ENCODE measurements at regions of chr19 and their contacts with region 1.

Region 1: GRCh38 chr19:33406521-33407139 is 33.1 kb downstream of the CEBPG start:
- DNase-seq: peak; percentile 94
- H3K4me3 ChIP-seq: no peak overlapping the region
- H3K27ac ChIP-seq: no peak overlapping the region; a peak in 1 of 4 replicates
- H3K4me1 ChIP-seq: peaks cover 0 to 28% of the 10 kb centered on the region in 2 experiments; a peak in 1 of 4 replicates
- H3K27me3 ChIP-seq: no peaks in the 10 kb centered on the region
- CTCF ChIP-seq: peak; percentile 83
- EP300 ChIP-seq: no peak
- RAD21 ChIP-seq: peak; percentile 91

Region 2: DNA sequence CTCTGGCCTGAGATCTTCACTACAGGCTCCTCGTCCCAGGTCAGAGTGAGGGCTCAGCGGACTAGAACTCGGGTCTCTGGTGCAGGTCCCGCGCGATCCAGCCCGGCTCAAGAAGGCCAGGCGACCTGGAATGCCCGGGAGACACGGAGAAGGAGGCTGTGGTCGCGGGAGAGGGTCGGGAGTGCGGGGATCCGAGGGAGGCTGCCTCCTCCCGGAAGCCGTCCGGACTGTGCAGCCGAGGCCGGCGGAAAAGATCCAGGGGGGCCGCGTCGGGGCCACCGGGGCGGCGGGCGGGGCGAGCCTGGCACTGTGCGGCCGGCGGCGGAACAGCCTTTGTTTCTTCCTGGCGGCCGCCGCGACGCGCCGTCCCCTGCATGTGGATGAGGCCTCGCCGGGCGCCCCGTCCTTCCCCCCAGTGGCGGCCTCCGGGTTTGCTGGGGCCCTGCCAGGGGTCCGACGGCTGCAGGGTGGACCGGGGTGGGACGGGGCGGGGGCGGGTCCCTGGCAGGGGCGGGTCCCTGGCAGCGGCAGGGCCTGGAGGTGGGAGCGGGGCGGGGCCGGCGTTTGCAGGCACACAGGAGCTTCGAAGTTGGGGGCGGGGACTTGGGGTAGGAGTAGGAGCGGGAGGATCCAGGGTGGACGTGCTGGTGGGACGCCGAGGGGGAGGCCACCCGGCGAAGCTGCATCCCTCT is 179.9 kb before region 1 on chr19:
- CTCF ChIA-PET with region 1: interaction called, 11 read pairs
- POLR2A ChIA-PET with region 1: no interaction called
- DNase-seq: peak; percentile 85
- H3K4me3 ChIP-seq: no peak overlapping the region; a peak in 1 of 4 replicates
- H3K27ac ChIP-seq: no peak overlapping the region
- H3K4me1 ChIP-seq: no peaks in the 10 kb centered on the region; a peak in 1 of 4 replicates
- H3K27me3 ChIP-seq: peaks cover 38% of the 10 kb centered on the region
- CTCF ChIP-seq: no peak
- EP300 ChIP-seq: no peak
- RAD21 ChIP-seq: no peak

Region 3: GRCh38 chr19:33235269-33235995 is 171.2 kb before region 1 on chr19:
- CTCF ChIA-PET with region 1: interaction called, 511 read pairs
- POLR2A ChIA-PET with region 1: no interaction called
- DNase-seq: peak; percentile 91
- H3K4me3 ChIP-seq: peak overlapping the region in 1 of 2 experiments; percentile 40; a peak in 1 of 4 replicates
- H3K27ac ChIP-seq: no peak overlapping the region
- H3K4me1 ChIP-seq: peaks cover 0 to 8% of the 10 kb centered on the region in 2 experiments; a peak in 1 of 4 replicates
- H3K27me3 ChIP-seq: no peaks in the 10 kb centered on the region
- CTCF ChIP-seq: peak; percentile 88
- EP300 ChIP-seq: no peak
- RAD21 ChIP-seq: peak; percentile 80

Region 4: DNA sequence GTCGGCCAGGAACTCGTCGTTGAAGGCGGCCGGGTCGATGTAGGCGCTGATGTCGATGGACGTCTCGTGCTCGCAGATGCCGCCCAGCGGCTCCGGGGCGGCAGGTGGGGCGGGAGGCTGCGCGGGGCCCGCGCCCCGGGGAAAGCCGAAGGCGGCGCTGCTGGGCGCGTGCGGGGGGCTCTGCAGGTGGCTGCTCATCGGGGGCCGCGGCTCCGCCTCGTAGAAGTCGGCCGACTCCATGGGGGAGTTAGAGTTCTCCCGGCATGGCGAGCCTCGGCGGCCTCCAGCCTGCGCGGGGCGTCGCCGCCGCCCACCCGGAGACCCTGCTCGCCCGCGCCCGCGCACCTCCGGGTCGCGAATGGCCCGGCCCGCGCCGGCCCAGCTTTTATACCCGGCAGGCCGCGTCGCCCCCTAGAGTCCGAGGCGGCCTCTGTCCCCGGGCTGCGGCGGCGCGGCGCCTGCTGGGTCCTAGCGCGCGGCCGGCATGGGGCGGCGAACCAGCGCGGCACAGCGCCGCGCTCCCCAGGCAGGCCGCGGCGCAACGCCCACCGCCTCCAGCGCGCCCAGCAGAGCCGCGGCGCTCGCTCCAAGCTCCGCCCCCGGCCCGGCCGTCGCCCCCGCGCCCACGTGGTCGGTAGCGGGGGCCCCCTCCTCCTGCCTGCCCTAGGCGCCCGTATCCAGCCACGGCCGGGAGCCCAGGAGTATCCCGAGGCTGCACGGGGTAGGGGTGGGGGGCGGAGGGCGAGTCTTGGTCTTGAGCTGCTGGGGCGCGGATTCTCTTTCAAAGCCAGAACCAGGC is 104.3 kb before region 1 on chr19 and contains the start of gene CEBPA:
- CTCF ChIA-PET with region 1: interaction called, 23 read pairs
- POLR2A ChIA-PET with region 1: no interaction called
- DNase-seq: peak; percentile 96
- H3K4me3 ChIP-seq: peak within 1 kb of the TSS; percentile 57 to 68
- H3K27ac ChIP-seq: no peak within 1 kb of the TSS
- H3K4me1 ChIP-seq: peaks cover 0 to 4% of the 10 kb centered on the region in 2 experiments; a peak in 1 of 4 replicates
- H3K27me3 ChIP-seq: peaks cover 54% of the 10 kb centered on the region
- CTCF ChIP-seq: peak; percentile 45
- EP300 ChIP-seq: no peak
- RAD21 ChIP-seq: peak; percentile 35; the same call in 1 of the 2 replicates
- polyA plus RNA-seq, gene CEBPA: 0.06 and 0.15 TPM in 2 replicates

Region 5: DNA sequence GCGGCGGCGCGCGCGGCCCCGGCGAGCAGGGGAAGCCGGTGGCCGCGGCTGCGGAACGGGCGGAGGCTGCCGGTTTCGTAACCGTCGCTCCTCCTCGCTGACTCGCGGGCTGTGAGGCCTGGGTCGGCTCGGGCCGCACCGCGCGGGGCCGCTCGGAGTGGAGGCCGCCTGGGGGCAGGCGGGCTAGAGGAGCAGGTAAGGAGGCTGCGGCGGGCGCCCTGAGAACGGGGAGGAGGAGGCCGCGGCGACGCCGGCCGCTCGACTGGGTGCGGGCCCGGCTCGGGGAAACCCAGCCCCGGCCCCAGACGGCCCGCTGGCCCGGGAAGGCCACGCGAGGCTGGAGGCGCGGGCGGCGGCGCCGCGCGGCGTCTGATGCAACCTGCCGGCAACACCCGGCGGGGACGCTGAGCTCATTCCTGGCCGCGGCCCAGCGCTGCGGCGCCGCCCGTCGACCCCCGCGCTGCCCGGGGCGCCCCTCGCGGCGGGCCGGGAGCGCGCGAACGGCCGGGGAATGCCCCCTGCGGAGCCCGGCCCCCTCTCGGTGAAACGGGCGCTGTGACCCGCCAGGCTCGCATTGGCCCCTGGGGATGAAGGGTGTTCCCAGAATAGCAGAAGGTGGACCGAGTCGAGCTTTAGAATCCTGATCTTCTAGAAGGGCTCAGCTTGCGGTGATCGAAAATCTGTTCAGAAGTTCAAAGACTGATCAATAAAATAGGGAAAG is 32.8 kb before region 1 on chr19 and contains the start of gene CEBPG:
- CTCF ChIA-PET with region 1: interaction called, 15 read pairs
- POLR2A ChIA-PET with region 1: interaction called, 3 read pairs
- DNase-seq: peak; percentile 88
- H3K4me3 ChIP-seq: peak within 1 kb of the TSS; percentile 78 to 83
- H3K27ac ChIP-seq: peak within 1 kb of the TSS; percentile 89 to 90
- H3K4me1 ChIP-seq: peaks cover 13 to 20% of the 10 kb centered on the region in 2 experiments; a peak in 3 of 4 replicates
- H3K27me3 ChIP-seq: no peaks in the 10 kb centered on the region
- CTCF ChIP-seq: peak; percentile 30; the same call in 1 of the 2 replicates
- EP300 ChIP-seq: no peak
- RAD21 ChIP-seq: no peak
- polyA plus RNA-seq, gene CEBPG: 9.1 and 9.5 TPM in 2 replicates

Region 6: DNA sequence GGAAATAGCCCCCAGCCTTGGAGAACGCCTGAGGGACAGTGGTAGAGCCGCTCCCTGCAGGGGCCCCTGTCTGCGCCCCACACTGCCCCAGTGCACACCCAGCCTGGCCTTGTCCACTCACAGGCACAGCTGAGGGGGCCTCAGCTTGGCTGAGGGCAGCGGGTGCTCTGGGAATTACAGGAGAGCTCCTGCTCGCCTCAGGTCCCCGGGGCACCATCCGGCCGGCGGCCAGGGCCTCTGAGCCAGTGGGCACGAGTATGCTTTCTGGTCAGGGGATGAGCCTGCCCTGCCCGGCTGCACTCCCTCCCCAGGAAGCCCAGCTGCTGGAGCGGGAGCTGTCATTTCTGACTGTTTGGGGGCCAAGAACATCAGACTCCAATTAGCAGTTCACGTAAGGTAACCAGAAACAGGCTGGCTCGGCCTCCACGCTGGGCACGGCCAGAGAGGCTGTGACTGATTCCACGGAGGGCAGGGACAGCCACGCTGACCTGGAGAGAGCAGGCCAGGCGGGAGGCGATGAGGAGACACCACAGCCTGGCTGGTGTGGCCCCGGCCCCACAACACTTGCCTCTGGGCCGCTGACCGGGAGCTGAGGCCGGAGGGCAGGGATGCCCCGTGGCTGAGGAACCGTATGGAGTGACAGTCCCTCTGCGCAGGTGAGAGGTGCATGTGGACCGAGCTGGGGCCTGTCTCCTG is 17.8 kb before region 1 on chr19:
- CTCF ChIA-PET with region 1: interaction called, 118 read pairs
- POLR2A ChIA-PET with region 1: interaction called, 3 read pairs
- DNase-seq: peak; percentile 83
- H3K4me3 ChIP-seq: no peak overlapping the region
- H3K27ac ChIP-seq: peak overlapping the region in 1 of 2 experiments; percentile 69; a peak in 2 of 4 replicates
- H3K4me1 ChIP-seq: peaks cover 0 to 47% of the 10 kb centered on the region in 2 experiments; a peak in 1 of 4 replicates
- H3K27me3 ChIP-seq: no peaks in the 10 kb centered on the region
- CTCF ChIP-seq: no peak
- EP300 ChIP-seq: no peak
- RAD21 ChIP-seq: no peak

Region 7: DNA sequence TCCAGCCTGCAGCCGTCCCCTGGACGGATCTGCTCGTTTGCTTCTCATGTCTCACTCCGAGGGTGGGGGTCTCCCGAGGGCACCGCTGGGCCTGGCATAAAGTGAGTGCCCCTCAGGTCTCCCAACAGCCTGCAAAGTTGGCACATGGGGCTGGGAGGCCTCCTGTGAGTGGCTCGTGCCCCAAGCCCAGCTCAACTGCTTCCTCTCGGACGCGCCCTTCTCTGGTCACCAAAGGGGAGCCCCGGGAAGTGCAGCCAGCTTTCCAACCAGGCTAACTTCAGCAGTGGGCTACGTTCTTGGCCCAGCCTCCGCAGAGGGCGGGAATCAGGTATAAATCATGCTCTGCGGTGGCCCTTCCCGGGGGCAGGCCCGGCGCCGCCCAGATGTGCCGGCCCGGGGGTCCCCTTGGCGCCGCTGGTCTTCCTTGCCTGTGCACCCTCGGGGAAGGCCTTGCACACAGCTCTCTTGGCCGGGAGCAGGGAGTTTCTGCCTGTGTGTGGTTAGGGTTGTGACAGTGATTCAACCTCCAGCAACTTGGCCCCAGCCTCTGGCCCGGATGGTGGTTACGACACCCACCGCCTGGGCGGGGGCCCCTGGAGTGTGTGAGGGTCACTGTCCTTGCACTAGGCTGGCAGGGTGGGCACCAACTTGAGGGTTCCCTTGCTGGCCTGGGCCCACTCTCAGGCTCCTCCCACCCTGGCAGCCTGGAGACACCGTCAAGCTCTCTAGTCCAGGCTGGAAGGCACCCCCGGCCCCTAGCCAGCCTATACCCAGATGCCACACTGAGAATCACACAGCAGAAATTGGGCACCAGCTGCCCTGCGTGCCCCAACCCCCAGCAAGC is 12.4 kb before region 1 on chr19:
- CTCF ChIA-PET with region 1: interaction called, 118 read pairs
- POLR2A ChIA-PET with region 1: no interaction called
- DNase-seq: peak; percentile 38
- H3K4me3 ChIP-seq: no peak overlapping the region
- H3K27ac ChIP-seq: no peak overlapping the region
- H3K4me1 ChIP-seq: peaks cover 0 to 33% of the 10 kb centered on the region in 2 experiments; a peak in 1 of 4 replicates
- H3K27me3 ChIP-seq: no peaks in the 10 kb centered on the region
- CTCF ChIP-seq: no peak
- EP300 ChIP-seq: no peak
- RAD21 ChIP-seq: no peak